ENCODE measurements at regions of chr5 and their contacts with region 1.

Region 1: DNA sequence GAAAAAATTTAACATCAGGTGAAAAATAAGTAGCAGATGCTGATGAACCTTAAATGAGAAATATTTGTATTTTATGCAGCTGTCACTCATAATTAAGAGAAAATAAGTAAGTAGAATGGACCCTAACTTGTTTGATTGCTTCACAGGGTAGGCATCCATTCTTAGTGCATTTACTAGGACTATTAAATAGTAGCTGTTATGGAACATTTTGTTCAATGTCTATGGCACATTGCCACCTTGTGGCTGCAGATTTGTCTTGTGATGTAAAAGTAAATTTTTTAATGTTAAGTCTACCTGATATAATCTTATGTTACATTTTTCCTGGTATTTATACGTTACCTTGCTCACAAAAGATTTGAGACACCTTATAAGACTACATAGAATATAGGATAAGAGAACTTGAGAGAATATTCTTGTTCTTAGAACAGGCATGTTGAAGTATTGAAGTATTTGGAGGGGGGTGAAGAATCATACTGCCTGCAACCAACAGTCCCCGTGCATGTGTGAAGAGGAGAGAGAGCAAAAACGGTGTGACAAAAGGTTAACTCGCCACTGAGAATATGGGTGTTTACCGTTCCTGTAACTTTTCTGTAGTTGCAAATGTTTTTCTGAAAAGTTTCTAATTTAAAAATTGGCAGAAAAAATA is 161.1 kb downstream of the MAST4 start:
- ATAC-seq: peak in 5 of 8 experiments; percentile 36 to 73 (median 59)
- H3K4me3 ChIP-seq: no peak overlapping the region
- H3K27ac ChIP-seq: no peak overlapping the region
- H3K4me1 ChIP-seq: peaks cover 0 to 4% of the 10 kb centered on the region in 2 donors

Region 2: DNA sequence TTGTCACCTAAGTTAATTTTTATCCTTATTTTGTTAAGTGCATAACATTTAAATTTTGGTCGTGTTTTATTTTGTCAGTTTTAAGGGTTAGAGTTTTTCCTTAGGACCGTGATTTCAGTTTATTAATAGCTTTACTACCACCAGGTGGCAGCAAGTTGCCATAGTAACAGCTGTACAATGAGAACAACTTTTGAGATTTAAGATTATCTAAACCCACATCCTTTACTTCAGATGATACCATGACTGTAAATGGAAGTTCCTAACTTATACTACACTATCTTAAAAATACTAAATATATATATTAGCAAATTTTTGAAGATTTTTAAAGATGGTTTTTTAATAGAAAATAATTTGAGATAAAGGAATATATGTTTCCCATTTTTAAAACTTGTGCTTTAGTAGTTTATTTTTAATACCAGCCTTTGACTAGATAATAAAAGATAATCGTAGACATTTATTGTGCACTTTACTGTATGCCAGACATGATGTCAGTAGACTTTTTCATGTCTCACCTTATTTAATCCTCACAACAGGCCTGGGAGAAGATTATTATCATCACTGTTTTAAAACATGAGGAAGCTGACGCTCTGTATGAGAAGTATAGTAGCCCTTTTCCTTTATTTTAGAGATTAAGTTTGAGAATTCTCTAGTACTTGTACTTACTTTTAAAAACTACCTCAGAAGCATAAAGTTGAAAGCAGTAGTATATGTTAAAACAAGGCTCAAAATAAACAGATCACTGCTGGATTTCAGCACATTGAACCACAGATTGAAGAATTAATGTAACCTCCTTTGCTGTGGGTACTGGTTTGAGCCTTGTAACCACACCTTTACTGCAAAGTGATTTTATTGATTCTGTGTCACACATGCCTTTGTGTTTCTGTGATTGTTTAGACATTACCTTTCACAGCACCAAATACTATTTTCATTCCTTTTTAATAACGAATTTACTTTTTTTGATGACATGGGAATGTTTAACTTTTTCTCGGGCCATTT is 585.7 kb before region 1 on chr5:
- in situ Hi-C with region 1: loop called in 1 of 9 experiments (anchors 25 kb)
- ATAC-seq: peak in 3 of 8 experiments; percentile 24 to 53 (median 46)
- H3K4me3 ChIP-seq: no peak overlapping the region
- H3K27ac ChIP-seq: no peak overlapping the region
- H3K4me1 ChIP-seq: no peaks in the 10 kb centered on the region

Region 3: DNA sequence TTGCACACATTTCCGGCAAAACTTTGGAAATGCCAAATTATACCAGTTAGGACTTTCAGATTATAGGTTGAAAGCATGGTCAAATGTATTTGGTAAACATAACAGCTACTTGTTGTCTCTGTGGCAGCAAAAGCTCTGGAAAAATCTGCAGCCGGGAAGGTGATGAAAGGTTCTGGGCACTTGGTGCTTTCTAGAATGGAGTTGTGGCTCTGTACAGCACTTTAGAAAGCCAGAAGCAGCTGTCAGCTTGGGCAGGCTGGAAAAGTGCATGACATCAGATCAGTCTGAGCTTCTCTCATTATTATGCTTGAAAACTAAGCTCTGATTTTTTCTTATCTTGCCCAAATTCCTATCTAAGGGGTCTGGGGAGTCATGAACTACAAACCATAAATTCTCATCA is 279.7 kb before region 1 on chr5:
- in situ Hi-C with region 1: no loop called
- ATAC-seq: no peak
- H3K4me3 ChIP-seq: no peak overlapping the region
- H3K27ac ChIP-seq: no peak overlapping the region
- H3K4me1 ChIP-seq: no peaks in the 10 kb centered on the region

Region 4: DNA sequence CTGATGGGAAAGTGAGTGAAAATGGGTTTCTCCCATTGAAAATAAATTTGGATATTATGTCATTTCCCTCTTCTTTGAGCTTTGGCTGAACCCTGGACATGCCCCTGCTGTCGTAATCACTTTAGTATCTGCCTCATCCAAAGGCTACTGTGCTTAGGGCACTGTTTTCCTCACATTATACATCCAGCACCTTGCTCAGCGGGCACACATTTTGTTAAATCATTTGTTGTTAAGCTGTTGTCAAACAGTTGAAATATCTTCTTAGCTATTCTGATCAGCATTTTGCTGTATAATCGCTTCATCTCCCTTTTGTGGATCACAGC is 791.9 kb after region 1 on chr5:
- in situ Hi-C with region 1: no loop called
- ATAC-seq: no peak
- H3K4me3 ChIP-seq: no peak overlapping the region
- H3K27ac ChIP-seq: no peak overlapping the region
- H3K4me1 ChIP-seq: peaks cover 4 to 6% of the 10 kb centered on the region in 2 donors